ENCODE measurements at regions of chr14 and their contacts with region 1.

Region 1: GRCh38 chr14:68788996-68789820 is 3.7 kb downstream of the ZFP36L1 start:
- DNase-seq: peak; percentile 88
- ATAC-seq: peak; percentile 11
- H3K4me3 ChIP-seq: peak overlapping the region; percentile 77 to 100 (median 94)
- H3K4me3 Mint-ChIP-seq: peak overlapping the region; percentile 97
- H3K27ac ChIP-seq: peak overlapping the region; percentile 50 to 100
- H3K27ac Mint-ChIP-seq: peak overlapping the region; percentile 100
- H3K4me1 ChIP-seq: peaks cover 32 to 59% of the 10 kb centered on the region in 2 donors
- H3K4me1 Mint-ChIP-seq: peaks cover 56% of the 10 kb centered on the region
- H3K27me3 ChIP-seq: no peaks in the 10 kb centered on the region
- H3K27me3 Mint-ChIP-seq: no peaks in the 10 kb centered on the region
- CTCF ChIP-seq: peak; percentile 81

Region 2: GRCh38 chr14:68268197-68268596 is 521.0 kb before region 1 on chr14:
- CTCF ChIA-PET with region 1: interaction called, 16 read pairs
- POLR2A ChIA-PET with region 1: interaction called, 6 read pairs
- intact Hi-C with region 1: loop called (anchors 5 kb)
- DNase-seq: peak; percentile 92
- ATAC-seq: peak; percentile 71
- H3K4me3 ChIP-seq: peak overlapping the region in 1 of 5 experiments; percentile 14
- H3K4me3 Mint-ChIP-seq: peak overlapping the region; percentile 72
- H3K27ac ChIP-seq: peak overlapping the region; percentile 78 to 94
- H3K27ac Mint-ChIP-seq: peak overlapping the region; percentile 95
- H3K4me1 ChIP-seq: peaks cover 78 to 89% of the 10 kb centered on the region in 2 donors
- H3K4me1 Mint-ChIP-seq: peaks cover 80% of the 10 kb centered on the region
- H3K27me3 ChIP-seq: no peaks in the 10 kb centered on the region
- H3K27me3 Mint-ChIP-seq: no peaks in the 10 kb centered on the region
- CTCF ChIP-seq: no peak

Region 3: GRCh38 chr14:68408680-68409079 is 380.5 kb before region 1 on chr14:
- CTCF ChIA-PET with region 1: interaction called, 13 read pairs
- POLR2A ChIA-PET with region 1: interaction called, 6 read pairs
- intact Hi-C with region 1: loop called (anchors 2 kb)
- DNase-seq: peak; percentile 62
- ATAC-seq: peak; percentile 46
- H3K4me3 ChIP-seq: no peak overlapping the region
- H3K4me3 Mint-ChIP-seq: no peak overlapping the region
- H3K27ac ChIP-seq: peak overlapping the region; percentile 30 to 60
- H3K27ac Mint-ChIP-seq: peak overlapping the region; percentile 84
- H3K4me1 ChIP-seq: peaks cover 57 to 60% of the 10 kb centered on the region in 2 donors
- H3K4me1 Mint-ChIP-seq: peaks cover 61% of the 10 kb centered on the region
- H3K27me3 ChIP-seq: no peaks in the 10 kb centered on the region
- H3K27me3 Mint-ChIP-seq: no peaks in the 10 kb centered on the region
- CTCF ChIP-seq: peak; percentile 24

Region 4: DNA sequence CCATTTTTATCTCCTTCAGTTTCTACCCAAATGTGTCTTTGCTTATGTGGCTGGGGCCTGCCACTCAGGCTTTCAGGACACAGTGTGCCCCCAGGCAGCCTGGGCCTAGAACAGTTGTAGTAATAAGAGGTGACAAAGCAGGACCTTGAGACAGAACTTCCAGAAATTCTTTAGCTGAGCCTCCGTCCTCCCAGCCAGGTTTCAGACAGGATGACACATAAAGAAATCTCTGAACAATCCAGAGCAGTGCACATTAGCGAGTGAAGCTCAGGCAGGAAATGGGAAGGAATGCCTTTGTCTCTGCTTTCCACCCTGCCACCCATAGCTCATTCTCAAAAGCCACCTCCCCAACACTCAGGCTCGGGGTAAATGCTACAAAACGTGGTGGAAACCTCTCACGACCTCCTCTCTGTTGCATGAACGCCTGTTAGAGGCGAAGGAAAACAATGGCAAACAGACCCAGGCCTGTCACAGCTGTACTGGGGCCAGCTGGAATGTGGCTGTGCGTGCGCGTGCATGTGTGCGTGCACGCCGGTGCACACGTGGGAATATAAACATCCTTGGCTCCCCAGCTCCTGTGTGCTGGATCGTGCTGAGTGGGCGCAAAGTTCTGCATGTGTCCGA is 283.1 kb before region 1 on chr14:
- CTCF ChIA-PET with region 1: interaction called, 5 read pairs
- POLR2A ChIA-PET with region 1: interaction called, 17 read pairs
- intact Hi-C with region 1: loop called (anchors 5 kb)
- DNase-seq: no peak
- ATAC-seq: no peak
- H3K4me3 ChIP-seq: no peak overlapping the region
- H3K4me3 Mint-ChIP-seq: peak overlapping the region; percentile 40
- H3K27ac ChIP-seq: peak overlapping the region; percentile 79 to 88
- H3K27ac Mint-ChIP-seq: peak overlapping the region; percentile 89
- H3K4me1 ChIP-seq: peaks cover 73 to 86% of the 10 kb centered on the region in 2 donors
- H3K4me1 Mint-ChIP-seq: peaks cover 83% of the 10 kb centered on the region
- H3K27me3 ChIP-seq: no peaks in the 10 kb centered on the region
- H3K27me3 Mint-ChIP-seq: no peaks in the 10 kb centered on the region
- CTCF ChIP-seq: no peak

Region 5: DNA sequence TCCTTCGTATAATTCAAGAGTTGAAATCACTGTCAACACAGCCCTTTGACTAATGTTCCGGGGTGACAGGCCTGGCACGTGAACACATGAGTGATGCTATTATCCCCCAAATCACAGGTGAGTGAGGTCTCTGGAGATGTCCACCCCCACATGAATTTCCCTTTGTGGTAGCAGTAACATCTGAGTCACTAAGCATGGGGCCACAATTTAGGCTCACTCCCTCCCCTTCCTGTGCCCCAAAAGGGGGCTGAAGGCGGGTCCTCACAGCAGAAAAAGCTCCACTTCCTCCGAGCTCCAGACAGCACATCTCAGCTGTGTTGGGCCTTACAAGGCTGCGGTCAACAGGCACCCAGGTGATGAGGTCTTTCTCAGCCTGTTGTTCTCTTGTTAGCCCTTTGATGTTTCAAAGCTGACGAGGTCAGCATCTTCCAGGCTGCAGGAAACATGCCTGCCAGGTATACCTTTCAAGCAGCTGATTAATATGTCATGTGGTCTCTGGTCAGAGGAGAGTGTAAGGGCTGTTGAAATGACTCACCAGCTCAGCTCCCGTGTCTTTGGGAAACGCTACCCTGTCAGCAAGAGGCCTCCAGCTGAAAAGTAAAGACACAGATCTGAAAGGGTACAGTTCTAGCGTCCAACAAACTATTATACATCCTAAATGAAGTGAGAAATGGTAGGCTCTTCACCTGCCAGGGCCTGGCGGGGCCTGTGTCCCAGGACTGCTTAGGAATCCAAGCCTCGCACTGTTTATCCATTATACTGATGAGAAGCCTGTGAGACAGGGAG is 103.6 kb before region 1 on chr14:
- CTCF ChIA-PET with region 1: interaction called, 97 read pairs
- POLR2A ChIA-PET with region 1: interaction called, 44 read pairs
- intact Hi-C with region 1: loop called (anchors 1 kb)
- DNase-seq: peak; percentile 95
- ATAC-seq: peak; percentile 81
- H3K4me3 ChIP-seq: peak overlapping the region in 2 of 5 experiments; percentile 18 to 45
- H3K4me3 Mint-ChIP-seq: peak overlapping the region; percentile 82
- H3K27ac ChIP-seq: peak overlapping the region; percentile 94 to 98
- H3K27ac Mint-ChIP-seq: peak overlapping the region; percentile 99
- H3K4me1 ChIP-seq: peaks cover 70 to 83% of the 10 kb centered on the region in 2 donors
- H3K4me1 Mint-ChIP-seq: peaks cover 90% of the 10 kb centered on the region
- H3K27me3 ChIP-seq: no peaks in the 10 kb centered on the region
- H3K27me3 Mint-ChIP-seq: no peaks in the 10 kb centered on the region
- CTCF ChIP-seq: no peak

Region 6: DNA sequence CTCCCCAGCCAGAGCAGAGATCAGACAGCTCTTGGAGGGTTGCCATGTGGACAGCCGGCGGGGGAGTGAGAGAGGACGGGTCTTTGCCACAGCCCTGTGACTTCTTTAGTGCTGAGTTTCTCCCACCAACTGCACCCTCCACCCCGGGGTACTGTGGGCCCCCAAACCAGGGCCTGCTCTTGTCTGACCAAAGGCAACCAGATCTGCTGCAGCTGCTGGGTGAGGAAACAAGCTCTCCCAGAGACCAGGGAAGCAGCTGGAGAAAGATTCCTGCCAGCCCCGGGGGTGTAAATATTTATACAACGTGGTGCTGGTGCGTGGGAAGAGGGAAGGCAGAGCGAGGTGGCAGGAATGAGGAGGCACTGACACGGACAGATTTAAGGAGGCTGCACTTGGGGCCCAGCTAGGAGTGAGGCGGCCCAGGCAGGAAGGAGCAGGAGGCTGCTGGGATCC is 18.0 kb after region 1 on chr14:
- CTCF ChIA-PET with region 1: interaction called, 263 read pairs
- POLR2A ChIA-PET with region 1: interaction called, 416 read pairs
- intact Hi-C with region 1: no loop called
- DNase-seq: peak; percentile 81
- ATAC-seq: no peak
- H3K4me3 ChIP-seq: peak overlapping the region in 2 of 5 experiments; percentile 1 to 54
- H3K4me3 Mint-ChIP-seq: peak overlapping the region; percentile 74
- H3K27ac ChIP-seq: peak overlapping the region; percentile 95
- H3K27ac Mint-ChIP-seq: peak overlapping the region; percentile 99
- H3K4me1 ChIP-seq: peaks cover 62 to 71% of the 10 kb centered on the region in 2 donors
- H3K4me1 Mint-ChIP-seq: peaks cover 81% of the 10 kb centered on the region
- H3K27me3 ChIP-seq: no peaks in the 10 kb centered on the region
- H3K27me3 Mint-ChIP-seq: no peaks in the 10 kb centered on the region
- CTCF ChIP-seq: no peak

Measured in B cell (primary cell).